GM13976 (cell line): ENCODE measurements at regions of chr11 and their contacts with region 1.

Region 1: DNA sequence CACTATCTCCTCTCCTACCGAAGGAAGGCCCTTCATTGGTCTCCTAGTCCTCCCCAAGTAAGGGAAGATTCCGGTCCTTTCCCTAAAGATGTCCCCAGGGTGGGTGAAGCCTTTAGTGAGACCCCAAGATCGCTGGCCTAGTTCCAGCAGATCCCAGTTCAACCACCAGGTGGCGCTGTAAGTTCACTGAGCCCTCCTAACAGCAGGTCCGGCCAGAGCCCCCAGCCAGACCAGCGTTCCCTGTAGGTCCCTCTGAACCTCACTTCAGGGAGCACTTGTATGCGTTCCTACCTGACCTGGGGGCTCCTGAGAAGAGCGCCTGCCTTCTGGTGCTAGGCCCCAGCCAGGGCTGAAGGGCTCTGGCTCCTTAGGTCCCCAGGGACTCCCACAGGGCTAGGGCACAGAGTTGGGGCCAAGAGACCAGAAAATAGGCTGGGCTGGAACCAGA is 38.1 kb downstream of the LMO1 start:
- DNase-seq: peak; percentile 91
- CTCF ChIP-seq: peak; percentile 84

Region 2: DNA sequence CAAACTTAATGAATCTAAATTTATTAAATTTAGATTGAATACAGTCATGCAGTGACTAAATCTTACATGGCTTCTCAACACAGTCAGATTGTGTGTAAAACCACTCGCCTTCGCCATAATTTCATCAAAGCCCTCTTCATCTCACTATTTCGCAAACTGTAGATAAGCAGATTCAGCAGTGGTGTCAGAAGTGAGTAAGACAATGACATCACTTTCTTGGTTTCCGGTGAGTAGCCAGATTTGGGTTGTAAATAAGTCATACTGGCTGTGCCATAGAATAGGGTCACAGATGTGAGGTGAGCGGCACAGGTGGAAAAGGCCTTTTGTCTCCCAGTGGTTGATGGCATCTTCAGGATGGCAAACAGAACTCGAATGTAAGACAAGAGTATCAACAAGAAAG is 298.0 kb before region 1 on chr11:
- in situ Hi-C with region 1: no loop called
- DNase-seq: no peak
- CTCF ChIP-seq: no peak

Region 3: GRCh38 chr11:7949934-7950333 is 275.7 kb before region 1 on chr11:
- in situ Hi-C with region 1: no loop called
- DNase-seq: no peak
- CTCF ChIP-seq: no peak

Region 4: GRCh38 chr11:8566613-8567210 is 341.1 kb after region 1 on chr11:
- in situ Hi-C with region 1: loop called (anchors 10 kb)
- DNase-seq: peak; percentile 17
- CTCF ChIP-seq: peak; percentile 45